ENCODE measurements at regions of chr19 and their contacts with region 1.

Region 1: DNA sequence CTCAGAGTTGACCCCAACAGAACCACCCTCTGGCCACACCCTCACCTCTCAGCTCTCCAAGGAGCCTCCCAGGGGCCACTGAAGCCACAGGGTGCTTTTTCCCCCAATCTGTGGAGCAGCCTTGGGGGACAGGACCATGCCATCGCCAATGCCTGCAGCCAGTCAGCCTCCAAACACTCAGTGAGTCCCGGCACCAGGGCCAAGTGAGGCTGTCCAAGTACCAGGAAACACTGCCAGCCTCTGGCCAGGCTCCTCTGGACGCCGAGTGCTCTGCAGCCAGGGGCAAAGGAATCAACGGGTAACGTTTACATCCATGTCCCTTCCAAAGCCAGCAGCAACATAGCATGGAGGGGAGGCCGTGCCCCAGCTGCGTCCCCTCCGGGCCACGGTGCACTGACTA is 9.5 kb upstream of the COMP start:
- DNase-seq: no peak

Region 2: DNA sequence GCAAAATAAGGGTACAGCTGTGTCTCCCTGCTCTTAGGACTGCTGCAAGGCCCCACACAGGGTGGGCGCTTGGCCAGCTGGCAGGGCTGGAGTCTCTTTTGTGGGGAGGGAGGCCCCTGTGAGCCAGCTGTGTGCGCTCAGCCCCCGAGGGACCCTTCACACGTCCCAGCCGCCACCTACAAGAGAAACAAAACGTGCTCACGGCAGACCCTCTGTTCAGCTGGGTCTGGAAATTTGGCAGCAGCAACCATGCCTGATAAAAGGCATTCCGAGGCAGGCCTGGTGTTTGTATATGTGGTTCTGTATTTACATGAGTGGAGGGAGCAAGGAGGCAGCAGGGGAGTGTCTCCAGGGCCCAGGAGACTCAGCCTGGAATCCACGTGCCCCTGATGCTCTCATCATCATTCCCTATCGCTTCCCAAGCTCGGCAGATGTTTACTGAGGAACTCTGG is 67.4 kb before region 1 on chr19:
- intact Hi-C with region 1: no loop called
- DNase-seq: no peak

Region 3: GRCh38 chr19:18771328-18772242 is 29.1 kb before region 1 on chr19:
- intact Hi-C with region 1: loop called in 1 of 2 experiments (anchors 1 kb)
- DNase-seq: peak; percentile 76

Measured in posterior vena cava (tissue), 2 donors.